Panc1 (cell line): ENCODE measurements at regions of chr20 and their contacts with region 1.

Region 1: GRCh38 chr20:25390538-25391528 is at the start of gene ABHD12:
- DNase-seq: no peak
- ATAC-seq: peak; percentile 96
- H3K4me3 ChIP-seq: peak within 1 kb of the TSS; percentile 88 to 89
- H3K27ac ChIP-seq: peak within 1 kb of the TSS; percentile 95
- H3K4me1 ChIP-seq: peaks cover 26% of the 10 kb centered on the region
- H3K27me3 ChIP-seq: no peaks in the 10 kb centered on the region
- CTCF ChIP-seq: no peak
- total RNA-seq, gene ABHD12: 90.9 TPM

Region 2: DNA sequence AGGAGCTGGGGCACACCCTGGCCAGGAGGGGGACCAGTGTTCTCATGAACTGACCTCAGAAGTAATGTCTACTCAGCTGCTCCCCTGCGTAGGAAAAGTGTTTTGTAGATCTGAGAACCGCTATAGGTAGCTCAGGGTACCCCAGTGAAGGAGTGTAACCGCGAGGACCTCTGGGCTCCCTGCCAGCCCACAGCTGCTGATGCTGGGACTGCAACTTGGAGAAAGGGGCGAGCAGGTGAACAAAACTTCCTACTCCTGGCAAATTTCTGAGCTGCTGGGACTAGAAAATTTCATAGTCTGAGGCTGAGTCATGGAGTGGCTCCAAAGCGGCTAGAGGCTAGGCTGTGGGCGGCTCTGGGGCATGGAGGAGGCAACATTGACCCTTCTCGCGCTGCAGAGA is 91.0 kb before region 1 on chr20:
- CTCF ChIA-PET with region 1: no interaction called
- POLR2A ChIA-PET with region 1: interaction called, 10 read pairs
- in situ Hi-C with region 1: no loop called
- intact Hi-C with region 1: no loop called
- DNase-seq: no peak
- ATAC-seq: peak; percentile 11
- H3K4me3 ChIP-seq: no peak overlapping the region
- H3K27ac ChIP-seq: peak overlapping the region; percentile 78
- H3K4me1 ChIP-seq: peaks cover 70% of the 10 kb centered on the region
- H3K27me3 ChIP-seq: no peaks in the 10 kb centered on the region
- CTCF ChIP-seq: no peak

Region 3: GRCh38 chr20:25310268-25310920 is 80.4 kb before region 1 on chr20:
- CTCF ChIA-PET with region 1: interaction called, 7 read pairs
- POLR2A ChIA-PET with region 1: no interaction called
- in situ Hi-C with region 1: no loop called
- intact Hi-C with region 1: loop called (anchors 10 kb)
- DNase-seq: peak; percentile 92
- ATAC-seq: peak; percentile 88
- H3K4me3 ChIP-seq: peak overlapping the region in 1 of 2 experiments; percentile 25; a peak in 2 of 4 replicates
- H3K27ac ChIP-seq: peak overlapping the region; percentile 96
- H3K4me1 ChIP-seq: peaks cover 51% of the 10 kb centered on the region
- H3K27me3 ChIP-seq: no peaks in the 10 kb centered on the region
- CTCF ChIP-seq: peak; percentile 87

Region 4: DNA sequence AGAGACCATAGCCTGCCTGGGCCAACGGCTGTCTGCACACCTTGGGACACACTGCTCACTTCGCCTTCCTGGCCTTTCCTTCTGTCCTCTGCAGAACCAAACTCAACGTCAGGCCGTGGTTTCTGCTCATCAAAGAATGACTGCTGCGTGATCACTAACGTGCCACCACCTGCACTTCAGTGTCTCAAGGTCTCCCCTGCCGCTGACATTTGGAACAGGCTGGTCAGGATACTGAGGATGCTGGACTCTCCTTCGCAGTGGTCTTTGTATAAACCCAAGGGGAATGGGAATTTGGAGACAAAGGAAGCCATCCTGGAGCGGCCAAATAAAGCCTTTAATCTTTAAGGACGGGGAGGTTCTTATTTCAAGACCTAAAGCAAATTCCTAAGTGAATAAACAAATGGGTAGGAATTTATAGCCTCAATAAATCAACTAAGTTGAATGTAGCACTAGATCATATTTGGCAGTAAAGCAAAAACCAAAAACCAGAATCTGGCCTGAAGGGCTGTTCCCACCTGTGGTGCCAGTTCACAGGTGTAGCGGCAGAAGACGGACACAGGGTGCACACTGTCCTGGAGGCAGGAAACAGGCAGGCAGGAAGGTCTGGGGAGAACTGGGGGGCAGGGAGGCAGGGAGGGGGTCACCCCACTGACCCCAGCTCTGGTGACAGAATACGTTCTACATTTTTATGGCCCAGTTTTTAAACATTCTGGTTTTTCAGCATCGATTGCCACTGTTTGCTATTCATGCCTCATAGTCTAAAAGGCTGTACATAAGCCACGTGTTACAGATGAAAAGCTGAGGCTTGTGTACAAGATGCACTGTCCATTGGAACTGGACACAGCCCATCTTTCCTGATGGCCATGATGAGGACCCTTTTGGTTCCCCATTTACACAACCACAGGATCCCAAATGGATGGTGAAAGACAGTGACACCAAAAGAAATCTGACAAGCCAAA is 36.8 kb before region 1 on chr20:
- CTCF ChIA-PET with region 1: no interaction called
- POLR2A ChIA-PET with region 1: no interaction called
- in situ Hi-C with region 1: no loop called
- intact Hi-C with region 1: loop called (anchors 5 kb)
- DNase-seq: no peak
- ATAC-seq: peak; percentile 64
- H3K4me3 ChIP-seq: no peak overlapping the region
- H3K27ac ChIP-seq: peak overlapping the region; percentile 51
- H3K4me1 ChIP-seq: peaks cover 49% of the 10 kb centered on the region
- H3K27me3 ChIP-seq: no peaks in the 10 kb centered on the region
- CTCF ChIP-seq: no peak

Region 5: DNA sequence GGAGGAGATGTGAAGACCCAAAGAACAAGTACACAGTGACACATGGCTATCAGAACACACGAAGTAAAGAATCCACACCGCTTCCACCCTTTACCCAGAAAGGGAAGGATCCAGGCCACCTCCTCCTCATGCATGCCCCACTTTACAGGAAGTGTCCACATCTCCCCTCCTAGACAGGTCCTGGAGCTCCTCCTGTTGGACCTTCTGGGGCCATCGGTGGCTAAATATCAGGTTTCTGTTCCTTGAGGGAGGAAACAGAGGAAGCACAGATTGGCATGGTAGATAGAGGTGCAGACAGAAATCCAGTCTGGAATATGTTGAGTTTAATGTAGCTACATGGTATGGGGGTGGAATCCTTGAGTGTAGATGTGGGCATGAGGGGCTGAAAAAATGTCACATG is 183.6 kb after region 1 on chr20:
- CTCF ChIA-PET with region 1: no interaction called
- POLR2A ChIA-PET with region 1: no interaction called
- in situ Hi-C with region 1: no loop called
- intact Hi-C with region 1: no loop called
- DNase-seq: no peak
- ATAC-seq: peak; percentile 42; the same call in 1 of the 2 replicates
- H3K4me3 ChIP-seq: no peak overlapping the region
- H3K27ac ChIP-seq: no peak overlapping the region
- H3K4me1 ChIP-seq: peaks cover 4% of the 10 kb centered on the region
- H3K27me3 ChIP-seq: no peaks in the 10 kb centered on the region
- CTCF ChIP-seq: no peak

Region 6: DNA sequence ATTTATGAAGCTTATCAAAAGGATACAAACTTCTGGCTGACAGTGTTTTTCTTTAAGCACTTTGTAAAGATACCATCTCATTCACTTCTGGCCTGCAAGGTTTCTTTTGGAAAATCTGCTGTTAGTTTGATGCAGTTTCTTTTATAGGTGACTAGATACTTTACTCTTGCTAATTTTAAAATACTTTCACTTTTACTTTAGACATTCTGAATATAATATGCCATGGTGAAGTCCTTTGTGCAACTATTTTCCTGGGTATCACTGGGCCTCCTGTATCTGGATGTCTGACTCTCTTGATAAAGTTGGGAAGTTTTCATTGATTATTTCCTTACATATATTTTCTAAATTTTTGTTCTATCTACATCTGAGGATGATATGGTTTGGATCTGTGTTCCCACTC is 334.8 kb after region 1 on chr20:
- CTCF ChIA-PET with region 1: no interaction called
- POLR2A ChIA-PET with region 1: no interaction called
- in situ Hi-C with region 1: no loop called
- intact Hi-C with region 1: no loop called
- DNase-seq: no peak
- ATAC-seq: no peak
- H3K4me3 ChIP-seq: no peak overlapping the region
- H3K27ac ChIP-seq: no peak overlapping the region
- H3K4me1 ChIP-seq: no peaks in the 10 kb centered on the region
- H3K27me3 ChIP-seq: no peaks in the 10 kb centered on the region
- CTCF ChIP-seq: no peak